ENCODE measurements at regions of chr6 and their contacts with region 1.

Region 1: DNA sequence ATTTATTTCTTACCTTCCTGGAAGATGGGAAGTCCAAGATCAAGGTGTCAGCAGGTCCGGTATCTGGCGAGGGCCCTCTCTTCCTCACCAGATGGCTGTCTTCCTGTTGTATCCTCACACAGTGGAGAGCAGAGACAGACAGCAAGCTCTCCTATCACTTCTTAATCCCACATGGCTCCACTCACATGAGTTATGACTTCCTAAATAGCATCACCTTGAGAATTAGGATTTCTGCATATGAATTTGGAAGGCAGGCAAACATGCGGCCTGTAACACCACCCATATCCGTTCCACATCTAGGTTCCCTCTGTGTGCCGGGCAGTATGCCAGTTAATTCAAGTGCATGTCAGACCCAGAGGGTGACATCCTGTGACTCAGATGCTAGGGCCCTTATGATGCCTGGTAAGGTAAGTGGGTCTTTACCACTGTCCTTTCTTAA is 2.1 kb downstream of the RAET1E start:
- DNase-seq: peak; percentile 72 to 81
- ATAC-seq: peak; percentile 82 to 87 (median 84)
- H3K4me3 ChIP-seq: peak overlapping the region; percentile 19
- H3K27ac ChIP-seq: peak overlapping the region; percentile 88
- H3K4me1 ChIP-seq: peaks cover 40% of the 10 kb centered on the region
- H3K27me3 ChIP-seq: no peaks in the 10 kb centered on the region
- CTCF ChIP-seq: no peak

Region 2: DNA sequence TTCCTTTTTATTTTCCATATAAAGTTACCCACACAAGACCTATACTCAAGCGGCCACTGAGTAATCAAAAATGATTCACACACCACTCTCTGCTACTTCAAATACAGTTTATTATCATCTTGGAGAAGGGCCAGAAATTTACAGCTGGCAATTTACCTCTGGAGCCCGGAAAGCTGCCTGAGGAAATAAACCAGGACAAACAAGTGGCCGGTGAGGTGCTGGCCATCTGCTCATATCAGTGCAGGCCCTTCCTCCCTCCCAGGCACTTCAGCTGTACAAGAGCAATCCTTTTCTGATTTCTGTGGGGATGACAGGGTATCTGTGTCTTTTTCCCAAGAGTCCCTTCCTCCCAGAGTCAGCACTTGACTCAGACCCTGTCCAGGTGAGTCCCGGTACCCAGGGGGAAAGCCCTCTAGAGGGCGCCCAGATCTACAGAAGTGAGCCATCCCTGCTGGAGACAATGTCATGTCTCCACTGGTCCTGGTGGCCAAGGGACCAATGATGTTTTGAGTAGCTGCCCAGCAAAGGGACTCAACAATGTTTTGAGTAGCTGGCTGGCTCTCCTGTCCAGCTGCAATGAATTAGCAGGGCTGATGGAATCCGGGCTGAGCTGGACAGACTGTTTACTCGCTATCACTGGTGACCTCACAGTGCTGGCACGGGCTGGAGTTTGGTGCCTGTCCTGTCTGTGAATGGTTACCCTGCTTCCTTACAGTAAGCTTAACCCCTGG is 55.3 kb before region 1 on chr6:
- intact Hi-C with region 1: loop called (anchors 5 to 10 kb)
- DNase-seq: peak; percentile 80 to 90
- ATAC-seq: peak; percentile 91 to 95 (median 94)
- H3K4me3 ChIP-seq: no peak overlapping the region
- H3K27ac ChIP-seq: peak overlapping the region; percentile 12
- H3K4me1 ChIP-seq: peaks cover 8% of the 10 kb centered on the region
- H3K27me3 ChIP-seq: no peaks in the 10 kb centered on the region
- CTCF ChIP-seq: peak; percentile 74

Region 3: GRCh38 chr6:149846321-149846720 is 49.5 kb before region 1 on chr6:
- intact Hi-C with region 1: loop called (anchors 5 to 10 kb)
- DNase-seq: peak; percentile 58 to 73
- ATAC-seq: peak; percentile 63 to 75 (median 72)
- H3K4me3 ChIP-seq: no peak overlapping the region
- H3K27ac ChIP-seq: peak overlapping the region; percentile 81
- H3K4me1 ChIP-seq: peaks cover 32% of the 10 kb centered on the region
- H3K27me3 ChIP-seq: no peaks in the 10 kb centered on the region
- CTCF ChIP-seq: no peak

Measured in psoas muscle (tissue), 8 donors.